ENCODE measurements at regions of chr15 and their contacts with region 1.

Region 1: GRCh38 chr15:40108855-40109735 is at the start of gene BMF:
- DNase-seq: peak; percentile 100
- ATAC-seq: peak; percentile 75
- H3K4me3 ChIP-seq: peak within 1 kb of the TSS; percentile 82
- H3K27ac ChIP-seq: peak within 1 kb of the TSS; percentile 50
- H3K4me1 ChIP-seq: peaks cover 48% of the 10 kb centered on the region
- H3K27me3 ChIP-seq: no peaks in the 10 kb centered on the region
- CTCF ChIP-seq: peak; percentile 68
- total RNA-seq, gene BMF: 0.95 and 5.2 TPM in 2 replicates

Region 2: DNA sequence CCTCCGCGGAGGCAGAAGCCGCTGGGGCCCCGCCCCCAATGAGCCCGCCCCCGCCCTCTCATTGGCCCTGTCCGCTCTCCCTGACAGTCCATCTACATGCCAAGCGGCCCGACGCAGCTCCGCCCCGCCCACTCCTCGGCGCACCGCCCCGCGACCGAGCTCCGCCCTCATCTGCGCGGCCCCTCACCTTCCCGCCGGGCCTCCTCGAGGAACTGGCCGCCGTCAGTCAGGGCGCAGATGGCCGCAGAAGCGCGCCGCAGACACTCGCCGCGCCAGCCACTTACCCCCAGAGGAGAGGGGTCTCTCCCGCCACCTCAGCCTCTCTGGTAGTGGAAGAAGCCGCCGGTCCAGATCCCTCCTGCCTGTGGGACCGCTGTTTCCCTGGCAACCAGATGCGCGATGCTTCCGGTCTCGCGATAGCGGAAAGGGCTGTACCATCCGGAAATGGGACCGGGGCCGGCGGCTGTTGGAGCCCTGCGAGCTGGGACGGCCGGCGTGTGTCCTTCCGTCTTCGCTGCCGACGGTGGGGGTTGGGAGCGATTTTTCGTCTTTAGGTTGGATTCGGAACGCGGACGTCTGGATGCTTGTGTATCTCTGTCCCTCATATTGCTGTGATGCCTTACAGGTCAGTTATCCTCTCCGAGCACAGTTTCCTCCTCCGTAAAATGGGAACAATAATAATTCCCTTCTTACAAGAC is 326.5 kb before region 1 on chr15 and contains the start of gene FSIP1:
- CTCF ChIA-PET with region 1: no interaction called
- POLR2A ChIA-PET with region 1: no interaction called
- intact Hi-C with region 1: loop called (anchors 5 kb)
- DNase-seq: peak; percentile 97
- ATAC-seq: peak; percentile 88
- H3K4me3 ChIP-seq: peak within 1 kb of the TSS; percentile 97
- H3K27ac ChIP-seq: peak within 1 kb of the TSS; percentile 73
- H3K4me1 ChIP-seq: peaks cover 49% of the 10 kb centered on the region
- H3K27me3 ChIP-seq: no peaks in the 10 kb centered on the region
- CTCF ChIP-seq: no peak
- total RNA-seq, gene FSIP1: 0.07 and 0.81 TPM in 2 replicates

Region 3: GRCh38 chr15:40044717-40045571 is 64.2 kb before region 1 on chr15:
- CTCF ChIA-PET with region 1: interaction called, 57 read pairs
- POLR2A ChIA-PET with region 1: no interaction called
- intact Hi-C with region 1: loop called (anchors 1 kb)
- DNase-seq: peak; percentile 88
- ATAC-seq: peak; percentile 91
- H3K4me3 ChIP-seq: peak overlapping the region; percentile 57
- H3K27ac ChIP-seq: peak overlapping the region; percentile 12; the same call in 1 of the 2 replicates
- H3K4me1 ChIP-seq: peaks cover 39% of the 10 kb centered on the region
- H3K27me3 ChIP-seq: no peaks in the 10 kb centered on the region
- CTCF ChIP-seq: peak; percentile 99

Region 4: DNA sequence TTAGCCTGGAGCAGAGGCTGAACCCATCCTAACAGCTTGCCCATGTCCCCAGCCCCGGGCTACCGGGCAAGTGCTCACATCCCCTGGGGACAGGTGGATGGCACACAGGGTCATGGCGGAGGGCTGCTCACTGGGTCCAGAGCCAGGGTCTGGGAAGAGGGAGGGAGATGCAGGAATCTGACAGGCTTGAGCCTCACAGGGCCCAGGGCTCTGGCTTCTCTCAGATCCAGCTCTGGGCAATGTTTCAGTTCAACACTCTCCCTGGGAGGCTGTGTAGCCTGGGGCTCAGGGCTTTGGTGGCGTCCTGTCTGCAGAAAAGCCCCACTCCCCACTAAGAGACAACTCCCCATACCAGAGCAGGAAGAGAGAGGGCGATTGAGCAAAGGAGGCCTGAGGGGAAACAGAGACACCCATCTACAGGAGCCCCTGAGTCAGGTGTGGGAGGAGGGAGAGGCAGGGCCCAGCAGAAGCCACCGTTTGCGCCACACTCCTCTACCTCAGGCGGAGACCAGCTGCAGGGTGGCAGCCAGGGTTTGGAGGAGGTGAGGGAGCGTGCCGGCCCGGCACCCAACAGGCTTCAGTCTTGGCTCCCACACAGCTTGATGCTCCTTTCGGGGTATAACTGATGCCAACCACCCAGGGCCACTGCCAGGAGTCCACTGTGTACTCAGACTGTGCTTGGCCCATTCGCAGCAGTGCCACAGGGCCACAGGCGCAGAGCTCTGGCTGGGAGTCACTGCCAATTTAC is 53.4 kb before region 1 on chr15:
- CTCF ChIA-PET with region 1: no interaction called
- POLR2A ChIA-PET with region 1: no interaction called
- intact Hi-C with region 1: no loop called
- DNase-seq: no peak
- ATAC-seq: no peak; the same call in 1 of the 2 replicates
- H3K4me3 ChIP-seq: no peak overlapping the region
- H3K27ac ChIP-seq: peak overlapping the region; percentile 37
- H3K4me1 ChIP-seq: peaks cover 24% of the 10 kb centered on the region
- H3K27me3 ChIP-seq: no peaks in the 10 kb centered on the region
- CTCF ChIP-seq: no peak

Region 5: DNA sequence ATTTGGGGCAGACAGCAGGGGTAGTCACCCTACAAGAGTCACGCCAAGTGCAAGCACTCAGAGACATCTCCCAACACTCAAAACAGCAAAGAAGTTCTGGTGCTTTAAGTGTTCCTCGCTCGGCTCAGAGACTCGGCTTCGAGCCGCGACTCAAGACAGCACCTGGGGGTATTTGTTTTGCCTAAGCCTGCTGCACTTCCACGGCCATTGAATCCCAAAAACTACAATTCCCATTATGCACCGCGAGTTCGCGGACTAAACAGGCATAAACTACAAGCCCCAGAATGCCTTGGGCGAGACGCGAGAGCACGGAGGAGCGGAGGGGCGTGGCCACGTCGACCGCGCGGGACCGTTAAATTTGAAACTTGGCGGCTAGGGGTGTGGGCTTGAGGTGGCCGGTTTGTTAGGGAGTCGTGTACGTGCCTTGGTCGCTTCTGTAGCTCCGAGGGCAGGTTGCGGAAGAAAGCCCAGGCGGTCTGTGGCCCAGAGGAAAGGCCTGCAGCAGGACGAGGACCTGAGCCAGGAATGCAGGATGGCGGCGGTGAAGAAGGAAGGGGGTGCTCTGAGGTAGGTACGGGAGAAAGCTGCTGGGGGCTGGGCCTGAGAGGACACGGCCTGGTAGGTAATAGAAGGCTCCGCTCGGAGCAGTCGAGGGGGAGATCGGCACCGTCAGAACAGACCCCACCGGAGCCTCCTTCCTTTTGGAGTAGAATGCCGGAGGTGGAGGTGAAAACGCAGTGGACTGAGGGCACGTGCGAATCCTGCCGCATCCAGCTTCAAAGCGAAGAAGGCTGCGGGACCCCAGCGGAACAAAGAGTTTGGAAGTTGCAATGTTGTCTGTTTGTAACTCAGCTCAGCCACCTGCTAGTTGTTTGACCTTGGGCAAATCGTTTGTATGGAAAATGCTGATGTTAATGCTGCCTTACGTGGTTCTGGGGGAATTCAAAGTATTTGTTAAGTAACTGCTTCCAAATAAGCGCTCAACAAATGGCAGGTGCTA is 51.9 kb after region 1 on chr15 and contains the start of gene BUB1B:
- CTCF ChIA-PET with region 1: interaction called, 3 read pairs
- POLR2A ChIA-PET with region 1: no interaction called
- intact Hi-C with region 1: loop called (anchors 2 kb)
- DNase-seq: peak; percentile 98
- ATAC-seq: peak; percentile 89
- H3K4me3 ChIP-seq: peak within 1 kb of the TSS; percentile 83
- H3K27ac ChIP-seq: peak within 1 kb of the TSS; percentile 42
- H3K4me1 ChIP-seq: peaks cover 27% of the 10 kb centered on the region
- H3K27me3 ChIP-seq: no peaks in the 10 kb centered on the region
- CTCF ChIP-seq: no peak
- total RNA-seq, gene BUB1B: 73.0 and 96.4 TPM in 2 replicates

Region 6: DNA sequence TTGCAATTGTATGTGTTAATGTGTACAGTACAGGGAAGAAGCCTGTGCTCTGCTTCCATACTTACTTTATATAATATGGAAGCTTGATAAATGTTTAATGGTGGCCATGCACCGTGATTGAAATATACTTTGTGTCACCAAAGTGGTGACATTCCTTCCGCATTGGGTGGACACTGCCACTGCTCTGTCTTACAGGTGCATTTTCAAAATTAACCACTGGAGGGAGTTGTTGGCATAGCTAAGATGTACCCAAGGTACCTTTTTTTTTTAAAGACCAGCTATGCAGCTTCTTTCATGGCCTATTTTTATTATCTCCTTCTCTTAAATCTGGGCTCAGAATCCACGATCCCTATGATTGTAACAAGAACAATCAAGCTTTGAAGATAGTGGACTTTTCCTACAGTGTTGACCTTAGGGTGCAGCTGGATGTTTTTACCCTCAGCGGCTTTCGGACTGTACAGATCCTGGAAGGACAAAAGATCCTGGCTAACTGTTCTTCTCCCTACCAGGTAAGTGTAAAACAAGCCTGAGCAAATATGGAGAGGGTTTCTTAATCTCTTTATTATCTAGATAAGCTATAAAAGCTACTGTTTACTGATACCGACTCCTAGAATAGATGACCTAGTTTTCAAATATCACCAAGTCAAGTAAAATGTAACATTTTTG is 108.2 kb after region 1 on chr15:
- CTCF ChIA-PET with region 1: no interaction called
- POLR2A ChIA-PET with region 1: no interaction called
- intact Hi-C with region 1: loop called (anchors 2 kb)
- DNase-seq: peak; percentile 92
- ATAC-seq: peak; percentile 85
- H3K4me3 ChIP-seq: no peak overlapping the region
- H3K27ac ChIP-seq: no peak overlapping the region
- H3K4me1 ChIP-seq: no peaks in the 10 kb centered on the region
- H3K27me3 ChIP-seq: no peaks in the 10 kb centered on the region
- CTCF ChIP-seq: peak; percentile 94

Region 7: DNA sequence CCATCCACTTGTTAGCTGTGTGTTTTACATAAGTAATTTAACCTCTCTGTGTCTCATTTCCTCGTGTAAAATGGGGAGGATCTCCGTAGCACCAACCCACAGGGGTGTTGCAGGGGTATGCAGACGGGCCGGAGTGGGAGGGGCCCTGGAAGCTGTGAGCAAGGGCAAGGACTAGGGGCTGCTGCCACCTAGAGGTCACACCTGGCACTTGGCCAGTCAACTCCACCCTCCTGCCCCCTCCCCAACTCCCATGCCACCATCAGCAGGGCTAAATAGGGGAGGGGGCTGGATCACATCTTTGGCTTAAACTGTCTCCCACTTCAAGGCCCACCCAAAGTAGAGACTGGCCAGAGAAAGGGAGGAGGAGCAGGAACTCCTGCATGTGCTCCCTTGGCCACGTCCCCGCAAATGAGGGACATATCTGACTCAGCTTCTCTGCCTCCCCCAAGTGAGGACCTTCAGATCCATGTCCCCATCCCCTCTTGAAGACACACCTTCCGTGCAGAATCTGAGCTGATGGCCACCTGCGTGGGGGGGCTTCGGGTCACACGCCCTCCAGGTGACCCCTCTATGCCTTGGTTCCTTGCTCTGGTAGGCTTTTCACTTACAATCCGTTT is 229.1 kb after region 1 on chr15:
- CTCF ChIA-PET with region 1: no interaction called
- POLR2A ChIA-PET with region 1: no interaction called
- intact Hi-C with region 1: loop called (anchors 5 kb)
- DNase-seq: peak; percentile 73
- ATAC-seq: peak; percentile 3; the same call in 1 of the 2 replicates
- H3K4me3 ChIP-seq: peak overlapping the region; percentile 75
- H3K27ac ChIP-seq: peak overlapping the region; percentile 100
- H3K4me1 ChIP-seq: peaks cover 66% of the 10 kb centered on the region
- H3K27me3 ChIP-seq: no peaks in the 10 kb centered on the region
- CTCF ChIP-seq: peak; percentile 90

Measured in PC-3 (cell line).